ENCODE measurements at regions of chr3 and their contacts with region 1.

Region 1: DNA sequence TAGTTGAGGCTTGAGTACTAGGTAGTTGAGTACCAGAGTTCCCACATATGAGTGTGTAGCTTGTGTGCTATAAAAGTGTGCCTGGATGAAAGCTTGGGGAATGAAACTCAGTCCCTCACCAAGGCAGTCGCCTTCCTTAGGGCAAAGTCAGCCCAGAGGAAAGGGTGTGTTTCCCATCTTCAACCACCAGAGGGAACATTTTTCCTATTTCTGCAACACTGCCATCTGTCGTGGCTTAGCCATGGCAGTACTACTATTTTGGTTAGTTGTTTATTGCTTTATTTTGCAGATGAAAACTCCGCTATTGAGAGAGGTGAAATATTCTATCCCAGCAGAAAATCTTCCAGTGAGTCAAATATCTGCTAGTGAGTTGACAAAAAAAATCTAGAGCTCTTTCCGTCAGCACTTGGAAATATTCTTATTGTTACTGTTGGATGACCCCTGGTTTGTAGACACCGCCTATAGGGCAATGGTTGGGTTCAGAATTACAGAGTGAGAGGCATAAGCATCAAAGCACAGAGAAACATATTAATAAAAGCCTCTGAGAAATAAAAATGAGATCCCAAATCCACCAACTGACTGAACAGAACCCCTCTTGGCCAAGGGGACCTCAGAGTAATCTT is 239.9 kb downstream of the CPNE4 start:
- DNase-seq: peak; percentile 57
- H3K4me3 Mint-ChIP-seq: no peak overlapping the region
- H3K27ac Mint-ChIP-seq: no peak overlapping the region
- H3K4me1 Mint-ChIP-seq: no peaks in the 10 kb centered on the region
- H3K27me3 Mint-ChIP-seq: peaks cover 14% of the 10 kb centered on the region
- CTCF ChIP-seq: peak; percentile 77

Region 2: GRCh38 chr3:131216801-131217200 is 578.1 kb before region 1 on chr3:
- CTCF ChIA-PET with region 1: no interaction called
- POLR2A ChIA-PET with region 1: no interaction called
- intact Hi-C with region 1: loop called (anchors 10 kb)
- DNase-seq: peak; percentile 63
- H3K4me3 Mint-ChIP-seq: peak overlapping the region; percentile 50
- H3K27ac Mint-ChIP-seq: peak overlapping the region; percentile 68
- H3K4me1 Mint-ChIP-seq: peaks cover 19% of the 10 kb centered on the region
- H3K27me3 Mint-ChIP-seq: no peaks in the 10 kb centered on the region
- CTCF ChIP-seq: no peak

Region 3: GRCh38 chr3:131608301-131608700 is 186.6 kb before region 1 on chr3:
- CTCF ChIA-PET with region 1: no interaction called
- POLR2A ChIA-PET with region 1: no interaction called
- intact Hi-C with region 1: no loop called
- DNase-seq: no peak
- H3K4me3 Mint-ChIP-seq: no peak overlapping the region
- H3K27ac Mint-ChIP-seq: no peak overlapping the region
- H3K4me1 Mint-ChIP-seq: no peaks in the 10 kb centered on the region
- H3K27me3 Mint-ChIP-seq: peaks cover 17% of the 10 kb centered on the region
- CTCF ChIP-seq: no peak

Region 4: DNA sequence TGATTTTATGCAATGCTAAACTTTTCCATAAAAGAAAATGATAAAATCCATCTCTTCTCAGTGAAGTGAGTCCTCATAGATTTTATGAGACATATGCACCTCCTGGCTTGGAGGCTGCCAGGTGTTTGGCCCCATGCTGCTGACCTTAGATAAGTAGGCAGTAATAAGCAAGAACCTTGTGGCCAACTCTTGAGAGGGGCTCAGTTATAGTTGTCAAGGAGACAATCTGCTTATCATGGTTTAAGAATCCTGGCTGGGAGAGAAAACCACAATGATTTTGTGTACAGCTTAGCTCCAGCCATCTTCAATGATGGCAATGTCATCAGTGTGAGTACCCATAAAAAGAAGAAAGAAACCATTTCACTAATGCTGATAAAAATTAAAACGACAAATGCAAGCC is 12.1 kb before region 1 on chr3:
- CTCF ChIA-PET with region 1: interaction called, 28 read pairs
- POLR2A ChIA-PET with region 1: no interaction called
- intact Hi-C with region 1: no loop called
- DNase-seq: no peak
- H3K4me3 Mint-ChIP-seq: no peak overlapping the region
- H3K27ac Mint-ChIP-seq: no peak overlapping the region
- H3K4me1 Mint-ChIP-seq: no peaks in the 10 kb centered on the region
- H3K27me3 Mint-ChIP-seq: no peaks in the 10 kb centered on the region
- CTCF ChIP-seq: no peak

Region 5: DNA sequence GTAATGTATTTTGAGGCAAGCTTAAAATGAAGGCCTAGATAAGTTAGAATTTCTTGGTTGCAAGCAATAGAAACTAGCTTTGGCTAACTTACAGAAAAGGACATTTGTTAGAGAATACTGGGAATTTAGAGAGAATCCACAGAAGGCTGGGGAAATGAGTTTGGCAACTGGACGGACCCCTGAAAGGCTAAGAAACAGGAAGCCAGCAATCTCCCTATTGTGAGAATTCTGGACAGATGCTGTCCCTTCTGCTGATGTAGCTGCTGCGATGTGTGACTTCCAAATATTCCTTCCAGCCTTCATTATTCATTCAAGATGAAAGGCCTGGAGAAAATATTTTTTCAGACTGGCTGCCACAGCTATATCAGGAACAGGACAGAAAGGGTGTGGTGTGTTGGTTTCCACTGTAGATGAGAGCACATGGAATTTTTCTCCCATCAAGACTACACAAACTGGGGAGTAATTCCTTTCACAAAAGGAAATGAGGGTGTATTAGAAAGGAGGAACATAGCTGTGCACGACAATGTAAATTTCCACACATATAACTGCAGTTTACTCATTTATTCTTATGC is 26.4 kb after region 1 on chr3:
- CTCF ChIA-PET with region 1: interaction called, 16 read pairs
- POLR2A ChIA-PET with region 1: interaction called, 3 read pairs
- intact Hi-C with region 1: no loop called
- DNase-seq: no peak
- H3K4me3 Mint-ChIP-seq: no peak overlapping the region
- H3K27ac Mint-ChIP-seq: no peak overlapping the region
- H3K4me1 Mint-ChIP-seq: no peaks in the 10 kb centered on the region
- H3K27me3 Mint-ChIP-seq: peaks cover 11% of the 10 kb centered on the region
- CTCF ChIP-seq: no peak

Region 6: GRCh38 chr3:132029182-132029902 is 234.5 kb after region 1 on chr3:
- CTCF ChIA-PET with region 1: interaction called, 104 read pairs
- POLR2A ChIA-PET with region 1: no interaction called
- intact Hi-C with region 1: loop called (anchors 1 kb)
- DNase-seq: peak; percentile 90
- H3K4me3 Mint-ChIP-seq: no peak overlapping the region
- H3K27ac Mint-ChIP-seq: no peak overlapping the region
- H3K4me1 Mint-ChIP-seq: peaks cover 3% of the 10 kb centered on the region
- H3K27me3 Mint-ChIP-seq: peaks cover 39% of the 10 kb centered on the region
- CTCF ChIP-seq: peak; percentile 88

Region 7: GRCh38 chr3:132399054-132399929 is 604.4 kb after region 1 on chr3:
- CTCF ChIA-PET with region 1: interaction called, 15 read pairs
- POLR2A ChIA-PET with region 1: no interaction called
- intact Hi-C with region 1: loop called (anchors 2 kb)
- DNase-seq: peak; percentile 66
- H3K4me3 Mint-ChIP-seq: no peak overlapping the region
- H3K27ac Mint-ChIP-seq: no peak overlapping the region
- H3K4me1 Mint-ChIP-seq: no peaks in the 10 kb centered on the region
- H3K27me3 Mint-ChIP-seq: no peaks in the 10 kb centered on the region
- CTCF ChIP-seq: peak; percentile 88

Region 8: DNA sequence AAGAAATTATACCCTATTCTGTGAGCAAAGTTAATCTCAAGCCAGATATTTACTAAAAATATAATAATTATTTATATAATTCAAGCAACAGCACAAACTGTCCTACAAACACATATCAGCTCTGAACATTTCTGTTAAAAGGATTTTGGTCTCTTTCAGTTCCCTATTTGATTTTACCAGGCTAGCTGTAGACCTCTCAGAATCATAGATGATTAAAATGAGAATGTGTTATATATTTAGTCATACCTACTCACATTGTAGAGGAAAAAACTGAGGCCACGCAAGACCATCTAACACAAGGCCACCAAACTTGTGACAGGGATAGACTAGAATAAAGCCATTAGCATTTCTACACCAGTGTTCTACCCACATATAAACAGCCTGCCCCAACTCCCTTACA is 830.7 kb after region 1 on chr3:
- CTCF ChIA-PET with region 1: no interaction called
- POLR2A ChIA-PET with region 1: no interaction called
- intact Hi-C with region 1: no loop called
- DNase-seq: no peak
- H3K4me3 Mint-ChIP-seq: no peak overlapping the region
- H3K27ac Mint-ChIP-seq: no peak overlapping the region
- H3K4me1 Mint-ChIP-seq: peaks cover 8% of the 10 kb centered on the region
- H3K27me3 Mint-ChIP-seq: no peaks in the 10 kb centered on the region
- CTCF ChIP-seq: no peak